BJ (cell line): ENCODE measurements at regions of chr9 and their contacts with region 1.

Region 1: DNA sequence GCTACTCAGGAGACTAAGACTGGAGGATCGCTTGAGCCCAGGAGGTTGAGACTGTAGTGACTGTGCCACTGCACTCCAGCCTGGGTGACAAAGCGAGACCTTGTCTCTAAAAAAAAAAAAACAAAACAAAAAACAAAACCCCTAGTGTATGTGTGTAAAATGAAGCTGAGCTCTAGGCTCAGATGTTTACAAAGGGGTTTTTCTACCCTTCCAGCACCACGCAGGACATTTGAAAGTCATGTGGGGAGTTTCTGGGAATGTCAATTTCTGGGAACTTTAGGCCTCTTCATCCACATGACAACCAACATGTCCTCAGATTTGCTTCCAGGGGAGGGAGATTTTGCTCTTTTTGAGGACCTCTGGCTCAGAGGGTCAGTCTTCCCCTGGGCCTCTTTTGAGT is 42.4 kb upstream of the AIF1L start:
- DNase-seq: no peak
- H3K4me3 ChIP-seq: no peak overlapping the region
- H3K27me3 ChIP-seq: no peaks in the 10 kb centered on the region; the same call in 1 of the 2 replicates
- CTCF ChIP-seq: no peak

Region 2: DNA sequence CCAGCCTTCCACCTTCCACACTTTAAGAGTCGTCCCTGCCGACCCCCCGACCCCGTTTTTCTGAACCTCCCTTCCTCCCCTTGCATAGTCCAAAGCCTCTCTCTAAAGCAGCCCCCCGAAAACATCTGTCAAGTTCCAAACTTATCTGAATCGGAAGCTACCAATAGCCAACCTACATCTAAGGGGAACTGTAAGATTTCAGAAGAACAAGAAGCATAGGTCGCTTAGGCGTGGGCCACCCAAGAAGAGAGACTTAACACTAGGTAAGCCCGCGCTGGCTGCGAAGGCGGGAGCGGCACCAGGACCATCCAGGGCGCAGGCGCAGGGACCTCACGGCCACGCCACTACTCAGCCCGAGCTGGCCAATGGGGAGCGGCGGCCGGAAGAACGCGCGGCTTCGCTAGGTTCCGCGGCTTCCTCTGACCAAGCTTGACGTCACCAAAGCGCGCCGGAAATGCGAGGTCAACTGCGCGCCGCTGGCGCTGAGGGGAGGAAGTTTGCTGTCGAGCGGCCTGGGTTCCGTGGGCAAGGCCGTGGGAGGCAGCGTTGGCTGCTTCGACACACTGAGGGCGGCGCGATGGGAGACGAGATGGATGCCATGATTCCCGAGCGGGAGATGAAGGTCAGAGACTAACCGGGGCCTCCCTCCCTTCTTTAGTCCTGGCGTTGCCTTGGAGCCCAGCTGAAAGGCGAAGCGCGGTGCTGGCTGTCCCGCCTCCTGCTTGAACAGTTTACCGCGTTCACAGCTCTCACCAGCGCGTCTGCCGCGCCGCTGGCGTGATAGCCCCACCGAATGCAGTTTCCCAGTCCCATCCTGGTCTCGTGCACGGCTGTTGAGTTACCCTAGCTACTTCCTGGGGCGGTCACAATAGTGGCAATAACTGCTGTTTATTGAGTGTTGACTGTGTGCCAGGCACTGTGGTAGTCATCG is 71.5 kb after region 1 on chr9 and contains the start of gene NUP214:
- CTCF ChIA-PET with region 1: interaction called, 12 read pairs
- POLR2A ChIA-PET with region 1: no interaction called
- DNase-seq: peak; percentile 87
- H3K4me3 ChIP-seq: peak within 1 kb of the TSS; percentile 86
- H3K27me3 ChIP-seq: no peaks in the 10 kb centered on the region
- CTCF ChIP-seq: no peak
- polyA plus RNA-seq, gene NUP214: 6.3 and 7.6 TPM in 2 replicates

Region 3: DNA sequence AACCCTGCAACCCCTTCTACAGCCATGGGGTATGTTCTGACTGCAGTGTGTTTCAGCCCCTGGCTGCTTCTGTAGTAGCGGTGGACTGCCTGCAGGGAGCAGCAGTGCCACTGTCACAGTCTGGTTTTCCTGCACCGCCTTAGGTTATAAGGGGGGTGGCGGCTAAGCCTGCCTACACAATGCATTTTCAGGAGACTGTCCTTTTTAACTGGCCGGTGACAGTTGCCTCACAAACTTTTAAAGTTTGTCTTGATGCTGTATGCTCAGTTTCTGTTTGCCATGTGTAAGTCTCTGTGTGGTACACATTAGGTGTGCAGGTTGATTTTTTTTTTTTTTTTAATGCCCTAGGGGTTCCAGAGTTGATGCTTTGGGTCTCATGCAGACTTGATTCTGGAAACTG is 124.5 kb after region 1 on chr9:
- CTCF ChIA-PET with region 1: interaction called, 10 read pairs
- POLR2A ChIA-PET with region 1: no interaction called
- DNase-seq: no peak
- H3K4me3 ChIP-seq: no peak overlapping the region
- H3K27me3 ChIP-seq: no peaks in the 10 kb centered on the region
- CTCF ChIP-seq: peak; percentile 92

Region 4: DNA sequence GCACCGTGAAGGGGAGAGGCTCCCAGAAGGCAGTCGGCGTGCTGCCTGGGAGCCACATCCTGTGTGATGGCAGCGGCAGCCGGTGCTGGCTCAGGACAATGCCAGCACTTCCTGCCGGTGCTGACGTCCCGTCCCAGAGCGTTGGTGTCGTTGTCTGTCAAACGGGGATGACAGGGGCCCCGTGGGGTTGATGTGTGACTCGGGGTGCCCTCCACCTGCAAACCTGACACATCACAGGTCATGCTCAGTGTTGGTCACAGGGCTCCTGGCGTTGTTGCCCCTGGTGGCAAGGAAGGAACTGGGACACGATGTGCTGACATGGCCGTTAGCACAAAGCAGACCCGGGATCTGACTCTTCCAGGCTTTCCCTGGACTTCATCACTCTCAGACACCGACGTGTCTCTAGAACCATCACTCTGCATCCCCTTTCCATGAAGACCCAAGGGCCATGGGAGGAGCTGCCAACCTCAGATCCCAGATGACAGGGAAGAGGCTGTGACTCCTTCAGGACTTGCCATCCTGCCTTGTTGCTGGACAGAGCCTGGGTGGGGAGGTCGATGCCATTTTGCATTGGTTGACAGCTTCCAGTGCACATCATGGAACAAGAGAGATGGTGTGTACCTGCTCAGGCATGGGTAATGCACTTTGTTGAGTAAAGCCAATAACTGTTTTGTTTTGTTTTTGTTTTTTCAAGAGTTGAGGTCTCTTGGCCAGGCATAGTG is 257.1 kb after region 1 on chr9:
- CTCF ChIA-PET with region 1: no interaction called
- POLR2A ChIA-PET with region 1: no interaction called
- DNase-seq: no peak
- H3K4me3 ChIP-seq: no peak overlapping the region
- H3K27me3 ChIP-seq: peaks cover 3% of the 10 kb centered on the region
- CTCF ChIP-seq: no peak